PC-3 (cell line): ENCODE measurements at regions of chr2 and their contacts with region 1.

Region 1: GRCh38 chr2:67423489-67423888 is 26.4 kb downstream of the ETAA1 start:
- DNase-seq: no peak
- ATAC-seq: no peak
- H3K4me3 ChIP-seq: no peak overlapping the region
- H3K27ac ChIP-seq: no peak overlapping the region
- H3K4me1 ChIP-seq: no peaks in the 10 kb centered on the region
- H3K27me3 ChIP-seq: no peaks in the 10 kb centered on the region
- CTCF ChIP-seq: no peak

Region 2: DNA sequence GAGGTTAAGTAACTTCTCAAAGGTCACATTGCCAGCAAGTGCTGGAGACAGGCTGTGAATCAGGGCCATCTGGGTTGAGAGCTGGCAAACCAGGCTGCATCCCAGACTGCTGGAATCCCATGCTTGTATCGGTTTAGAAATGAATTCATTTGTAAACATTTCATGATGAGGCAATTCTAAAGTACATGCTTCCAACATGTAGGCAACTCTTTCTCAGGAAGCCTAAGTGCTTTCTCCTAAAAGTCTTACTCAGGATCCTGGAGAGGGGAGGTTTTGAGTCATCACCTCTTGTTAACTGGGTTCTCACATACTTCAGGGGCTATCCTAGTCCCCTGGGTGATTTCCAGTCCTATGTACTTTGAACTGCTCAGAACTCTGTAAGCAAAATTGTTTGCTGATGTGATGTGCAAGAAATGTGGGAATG is 572.0 kb before region 1 on chr2:
- CTCF ChIA-PET with region 1: no interaction called
- POLR2A ChIA-PET with region 1: no interaction called
- intact Hi-C with region 1: no loop called
- DNase-seq: peak; percentile 18
- ATAC-seq: no peak
- H3K4me3 ChIP-seq: no peak overlapping the region
- H3K27ac ChIP-seq: no peak overlapping the region
- H3K4me1 ChIP-seq: no peaks in the 10 kb centered on the region
- H3K27me3 ChIP-seq: peaks cover 24% of the 10 kb centered on the region
- CTCF ChIP-seq: no peak

Region 3: DNA sequence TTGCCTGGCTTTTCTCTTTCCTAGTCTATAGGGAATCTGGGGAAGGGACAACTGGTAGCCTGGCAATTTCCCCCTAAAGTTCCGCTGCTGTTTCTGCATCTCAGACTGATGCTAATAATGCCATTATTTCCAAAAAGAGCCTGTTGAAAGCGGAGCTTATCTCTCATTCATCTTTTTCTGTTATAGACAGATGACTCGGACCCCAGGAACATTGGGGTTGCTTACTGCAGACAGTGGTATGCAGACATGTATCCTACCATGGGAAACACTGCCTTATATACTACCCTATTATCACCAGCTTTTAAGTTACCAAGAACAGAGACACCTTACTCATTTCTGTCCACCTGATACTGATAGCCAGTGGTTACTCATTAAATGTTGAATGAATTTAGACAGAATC is 11.1 kb before region 1 on chr2:
- CTCF ChIA-PET with region 1: no interaction called
- POLR2A ChIA-PET with region 1: interaction called, 30 read pairs
- intact Hi-C with region 1: no loop called
- DNase-seq: no peak
- ATAC-seq: no peak
- H3K4me3 ChIP-seq: no peak overlapping the region
- H3K27ac ChIP-seq: no peak overlapping the region
- H3K4me1 ChIP-seq: peaks cover 8% of the 10 kb centered on the region
- H3K27me3 ChIP-seq: no peaks in the 10 kb centered on the region
- CTCF ChIP-seq: no peak

Region 4: GRCh38 chr2:67532390-67532789 is 108.9 kb after region 1 on chr2:
- CTCF ChIA-PET with region 1: no interaction called
- POLR2A ChIA-PET with region 1: no interaction called
- intact Hi-C with region 1: no loop called
- DNase-seq: no peak
- ATAC-seq: no peak
- H3K4me3 ChIP-seq: no peak overlapping the region
- H3K27ac ChIP-seq: no peak overlapping the region
- H3K4me1 ChIP-seq: no peaks in the 10 kb centered on the region
- H3K27me3 ChIP-seq: no peaks in the 10 kb centered on the region
- CTCF ChIP-seq: no peak